Activated CD4-positive, alpha-beta memory T cell treated with anti-CD3 and anti-CD28 coated beads for 36 hours (primary cell): ENCODE measurements at regions of chr2 and their contacts with region 1.

Region 1: DNA sequence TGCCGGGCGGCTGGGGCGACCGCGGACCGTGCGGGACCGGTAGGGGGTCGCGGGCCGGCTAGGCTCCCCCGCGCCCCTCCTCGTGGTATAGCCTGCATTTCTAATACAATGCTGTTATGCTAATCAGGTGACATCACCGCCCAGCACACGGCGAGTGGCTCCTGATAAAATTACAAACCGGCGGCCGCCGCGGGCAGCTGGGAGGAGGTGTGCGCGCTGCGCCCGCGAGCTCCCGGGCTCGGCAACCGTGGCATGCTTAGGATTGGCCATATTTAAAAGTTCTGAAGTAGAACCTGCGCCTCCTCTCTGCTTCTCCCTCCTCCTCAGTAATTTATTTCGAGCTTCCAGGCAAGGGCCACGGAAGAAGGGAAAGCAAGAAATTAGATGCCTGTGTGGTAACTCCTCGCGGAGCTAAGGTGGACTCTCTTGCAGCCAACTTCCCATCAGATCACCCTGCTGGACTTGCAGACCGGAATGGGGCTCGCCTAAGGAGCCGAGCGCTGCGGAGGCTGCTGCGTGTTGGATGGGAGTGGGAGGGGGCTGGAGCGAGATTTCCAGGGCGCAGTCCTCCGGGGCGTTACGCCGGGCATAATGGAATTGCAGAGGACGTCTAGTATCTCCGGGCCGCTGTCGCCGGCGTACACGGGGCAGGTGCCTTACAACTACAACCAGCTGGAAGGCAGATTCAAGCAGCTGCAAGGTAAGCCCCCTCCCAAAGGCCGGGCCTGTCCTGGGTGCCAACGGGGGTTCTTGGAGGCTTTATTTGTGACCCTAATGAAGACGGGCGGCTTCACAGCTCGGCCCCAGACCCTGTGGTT is 102.3 kb downstream of the SPTBN1 start:
- DNase-seq: peak; percentile 85
- H3K4me3 Mint-ChIP-seq: peak overlapping the region; percentile 83
- H3K27ac Mint-ChIP-seq: peak overlapping the region; percentile 89
- H3K4me1 Mint-ChIP-seq: peaks cover 42% of the 10 kb centered on the region
- H3K27me3 Mint-ChIP-seq: no peaks in the 10 kb centered on the region

Region 2: DNA sequence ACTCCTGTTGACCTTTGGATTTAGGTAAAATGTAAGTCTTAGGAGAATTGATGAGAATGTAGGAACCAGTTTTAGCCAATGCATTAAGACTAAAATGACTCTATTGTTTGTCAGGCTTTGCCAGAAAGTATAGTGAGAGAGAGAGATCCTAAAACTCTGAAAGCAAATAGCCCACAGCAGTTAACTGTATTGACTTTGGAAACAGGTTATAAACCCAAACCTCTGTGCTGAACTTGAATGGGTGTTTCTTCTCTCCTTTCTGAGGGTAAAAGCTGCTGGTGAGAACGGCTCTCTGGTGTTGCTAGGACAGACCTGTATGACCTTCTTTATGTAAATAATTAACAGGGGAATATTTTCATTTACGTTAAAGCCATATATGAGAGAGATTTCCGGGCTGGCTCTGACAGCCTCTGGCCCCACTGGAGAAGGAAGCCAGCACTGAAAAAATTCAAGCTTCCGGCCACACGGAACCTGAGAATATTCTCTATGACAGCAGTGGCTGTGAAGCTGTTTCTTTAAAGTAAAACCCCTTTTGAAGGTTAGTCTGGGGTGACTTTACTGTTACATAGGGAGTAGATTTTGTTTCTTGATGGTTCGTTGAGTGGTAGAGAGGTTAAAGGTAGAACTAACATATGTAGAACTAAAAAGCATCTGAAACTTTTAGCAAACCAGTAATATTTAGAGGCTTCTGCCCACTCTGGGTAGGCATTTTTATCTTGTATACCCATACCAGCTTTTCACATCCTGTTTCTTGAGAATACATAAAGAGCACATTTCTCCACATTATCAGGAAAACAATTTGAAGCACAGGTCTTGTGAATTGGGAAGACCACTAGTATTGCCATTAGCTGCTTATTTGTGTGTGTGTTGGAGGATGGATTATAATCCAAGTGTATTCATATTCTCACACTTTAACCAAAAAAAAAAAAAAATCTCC is 21.6 kb after region 1 on chr2:
- CTCF ChIA-PET with region 1: interaction called, 21 read pairs
- POLR2A ChIA-PET with region 1: interaction called, 113 read pairs
- intact Hi-C with region 1: no loop called
- DNase-seq: no peak
- H3K4me3 Mint-ChIP-seq: peak overlapping the region; percentile 51
- H3K27ac Mint-ChIP-seq: peak overlapping the region; percentile 81
- H3K4me1 Mint-ChIP-seq: peaks cover 90% of the 10 kb centered on the region
- H3K27me3 Mint-ChIP-seq: no peaks in the 10 kb centered on the region

Region 3: DNA sequence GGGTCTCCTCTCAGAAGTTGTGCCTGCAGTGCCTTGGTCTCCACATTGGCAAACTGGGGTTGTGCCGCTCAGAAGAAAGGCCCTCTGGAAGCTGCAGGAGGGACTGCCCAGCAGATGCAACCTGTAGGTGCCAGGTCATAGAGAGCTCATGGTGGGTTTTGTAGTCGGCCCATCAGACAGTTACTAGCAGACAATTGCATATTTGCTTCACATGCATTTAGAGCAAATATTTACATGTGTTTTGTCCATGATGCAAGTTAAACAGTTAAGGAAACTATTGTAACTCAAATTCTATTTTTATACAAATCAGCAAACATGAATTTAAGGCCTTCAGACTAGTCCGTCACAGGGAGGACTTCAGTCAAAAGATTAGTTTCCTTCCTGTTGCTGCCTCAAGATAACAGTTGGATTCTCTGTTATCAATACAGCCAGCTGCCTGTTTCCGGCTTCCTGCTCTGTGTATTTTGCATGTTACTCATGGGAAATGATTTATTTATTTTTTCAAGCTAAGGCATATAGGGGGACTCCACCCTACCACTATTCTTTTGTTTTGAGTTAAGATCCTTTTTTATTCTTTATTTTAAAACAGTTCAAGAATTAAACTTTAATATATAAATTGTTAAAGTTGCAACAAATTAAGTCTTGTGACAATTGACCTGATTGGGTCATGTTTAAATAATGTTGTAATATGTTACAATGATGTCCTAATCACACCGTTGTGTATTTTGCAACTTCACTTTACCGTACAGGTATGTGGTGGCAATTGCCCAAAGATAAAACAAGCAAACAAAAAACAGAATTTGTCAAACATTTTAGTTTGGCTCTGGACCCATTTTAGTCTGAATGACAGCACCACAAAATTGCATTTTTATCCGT is 31.2 kb after region 1 on chr2:
- CTCF ChIA-PET with region 1: interaction called, 5 read pairs
- POLR2A ChIA-PET with region 1: interaction called, 25 read pairs
- intact Hi-C with region 1: loop called (anchors 1 kb)
- DNase-seq: peak; percentile 60
- H3K4me3 Mint-ChIP-seq: peak overlapping the region; percentile 48
- H3K27ac Mint-ChIP-seq: peak overlapping the region; percentile 94
- H3K4me1 Mint-ChIP-seq: peaks cover 87% of the 10 kb centered on the region
- H3K27me3 Mint-ChIP-seq: no peaks in the 10 kb centered on the region

Region 4: DNA sequence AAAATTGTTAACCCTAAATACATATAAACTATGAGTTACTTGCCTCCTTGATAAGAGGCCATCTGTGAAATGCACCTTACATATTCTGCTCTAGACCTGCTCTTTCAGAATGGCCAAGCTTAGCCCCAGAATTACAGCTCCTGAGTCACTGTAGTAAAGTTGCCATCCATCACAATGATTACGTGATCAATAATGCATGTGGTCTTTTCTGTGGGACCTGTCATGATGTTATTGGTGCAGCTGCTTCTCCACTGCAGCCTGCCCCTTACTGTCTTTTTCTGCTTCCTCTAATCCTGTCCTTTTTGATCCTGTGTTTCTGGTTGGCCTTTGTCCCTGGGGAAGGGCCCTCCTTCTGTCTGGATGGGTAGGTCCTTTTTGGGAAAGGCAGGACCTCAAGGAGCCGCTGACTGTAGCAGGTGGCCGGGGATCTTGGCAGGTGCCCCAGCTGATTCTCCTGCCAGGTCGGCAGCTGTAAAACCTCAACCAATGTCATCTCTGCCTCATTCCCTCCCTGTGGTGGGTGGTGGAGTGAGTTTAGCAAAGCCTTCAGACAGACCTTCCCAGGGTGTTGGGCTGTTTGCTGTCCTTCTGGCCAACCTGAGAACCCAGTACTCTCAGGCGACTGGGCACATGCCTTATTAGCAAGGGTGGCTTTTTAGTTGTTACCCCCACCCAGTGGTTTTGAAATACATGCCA is 38.9 kb after region 1 on chr2:
- CTCF ChIA-PET with region 1: interaction called, 9 read pairs
- POLR2A ChIA-PET with region 1: interaction called, 25 read pairs
- intact Hi-C with region 1: loop called (anchors 2 kb)
- DNase-seq: peak; percentile 50
- H3K4me3 Mint-ChIP-seq: peak overlapping the region; percentile 39
- H3K27ac Mint-ChIP-seq: peak overlapping the region; percentile 91
- H3K4me1 Mint-ChIP-seq: peaks cover 84% of the 10 kb centered on the region
- H3K27me3 Mint-ChIP-seq: no peaks in the 10 kb centered on the region

Region 5: GRCh38 chr2:54606393-54606969 is 48.1 kb after region 1 on chr2:
- CTCF ChIA-PET with region 1: interaction called, 3 read pairs
- POLR2A ChIA-PET with region 1: interaction called, 17 read pairs
- intact Hi-C with region 1: loop called (anchors 1 kb)
- DNase-seq: peak; percentile 48
- H3K4me3 Mint-ChIP-seq: no peak overlapping the region
- H3K27ac Mint-ChIP-seq: peak overlapping the region; percentile 30
- H3K4me1 Mint-ChIP-seq: peaks cover 74% of the 10 kb centered on the region
- H3K27me3 Mint-ChIP-seq: no peaks in the 10 kb centered on the region

Region 6: GRCh38 chr2:54657664-54658083 is 99.3 kb after region 1 on chr2:
- CTCF ChIA-PET with region 1: interaction called, 13 read pairs
- POLR2A ChIA-PET with region 1: interaction called, 4 read pairs
- intact Hi-C with region 1: no loop called
- DNase-seq: peak; percentile 55
- H3K4me3 Mint-ChIP-seq: no peak overlapping the region
- H3K27ac Mint-ChIP-seq: peak overlapping the region; percentile 57
- H3K4me1 Mint-ChIP-seq: peaks cover 18% of the 10 kb centered on the region
- H3K27me3 Mint-ChIP-seq: no peaks in the 10 kb centered on the region